HepG2 (cell line): ENCODE measurements at regions of chr6 and their contacts with region 1.

Region 1: DNA sequence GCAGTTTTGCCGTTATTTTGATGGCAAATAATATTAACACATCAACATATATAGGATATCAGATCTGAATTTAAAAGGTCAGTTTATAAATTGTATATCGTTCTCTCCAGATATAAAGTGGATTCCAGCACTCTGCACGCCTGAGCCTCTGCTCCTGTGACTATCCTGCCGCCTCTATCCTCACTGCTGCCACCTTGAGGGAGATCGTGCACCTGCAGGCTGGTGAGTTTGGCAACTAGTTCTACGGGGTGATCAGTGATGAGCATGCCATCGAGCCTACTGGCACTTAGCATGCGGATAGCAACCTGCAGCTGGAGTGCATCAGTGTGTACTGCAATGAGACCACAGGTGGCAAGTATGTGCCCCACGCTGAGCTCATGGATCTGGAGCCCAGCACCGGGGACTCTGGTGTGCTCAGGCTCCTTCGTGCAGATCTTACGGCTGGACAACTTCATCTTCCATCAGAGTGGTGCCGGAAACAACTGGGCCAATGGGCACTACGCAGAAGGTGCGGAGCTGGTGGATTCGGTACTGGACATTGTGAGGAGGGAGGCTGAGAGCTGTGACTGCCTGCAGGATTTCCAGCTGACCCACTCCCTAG is 84.9 kb downstream of the FBXO5 start:
- DNase-seq: peak; percentile 52
- ATAC-seq: peak; percentile 100
- H3K4me3 ChIP-seq: no peak overlapping the region
- H3K27ac ChIP-seq: no peak overlapping the region
- H3K4me1 ChIP-seq: no peaks in the 10 kb centered on the region
- H3K27me3 ChIP-seq: no peaks in the 10 kb centered on the region
- CTCF ChIP-seq: peak; percentile 87
- EP300 ChIP-seq: no peak
- POLR2A ChIP-seq: no peak
- RAD21 ChIP-seq: peak; percentile 43

Region 2: DNA sequence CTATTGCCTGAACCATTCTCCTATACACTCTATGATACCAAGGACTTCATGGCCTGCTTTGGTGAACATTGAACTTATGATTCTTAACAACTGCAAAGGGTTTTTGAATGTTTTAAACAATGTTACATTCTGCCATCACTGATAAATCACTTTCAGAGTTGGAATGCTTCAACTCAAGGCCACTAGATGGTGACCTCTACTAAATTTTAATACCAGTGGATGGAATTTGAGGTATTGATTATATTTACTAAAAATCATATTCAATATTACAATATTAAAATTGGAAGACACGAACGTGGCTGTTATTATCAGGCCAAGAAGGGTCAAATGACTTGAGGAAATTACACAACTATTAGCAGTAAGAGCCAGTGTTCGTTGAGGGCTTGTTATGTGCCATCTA is 181.6 kb before region 1 on chr6:
- CTCF ChIA-PET with region 1: no interaction called
- POLR2A ChIA-PET with region 1: no interaction called
- in situ Hi-C with region 1: no loop called
- intact Hi-C with region 1: loop called (anchors 5 kb)
- DNase-seq: no peak
- ATAC-seq: no peak
- H3K4me3 ChIP-seq: no peak overlapping the region
- H3K27ac ChIP-seq: no peak overlapping the region
- H3K4me1 ChIP-seq: no peaks in the 10 kb centered on the region
- H3K27me3 ChIP-seq: no peaks in the 10 kb centered on the region
- CTCF ChIP-seq: 0 out of 2 replicates have a peak, but pooled peaks have one; percentile 5
- EP300 ChIP-seq: no peak
- POLR2A ChIP-seq: no peak
- RAD21 ChIP-seq: no peak

Region 3: DNA sequence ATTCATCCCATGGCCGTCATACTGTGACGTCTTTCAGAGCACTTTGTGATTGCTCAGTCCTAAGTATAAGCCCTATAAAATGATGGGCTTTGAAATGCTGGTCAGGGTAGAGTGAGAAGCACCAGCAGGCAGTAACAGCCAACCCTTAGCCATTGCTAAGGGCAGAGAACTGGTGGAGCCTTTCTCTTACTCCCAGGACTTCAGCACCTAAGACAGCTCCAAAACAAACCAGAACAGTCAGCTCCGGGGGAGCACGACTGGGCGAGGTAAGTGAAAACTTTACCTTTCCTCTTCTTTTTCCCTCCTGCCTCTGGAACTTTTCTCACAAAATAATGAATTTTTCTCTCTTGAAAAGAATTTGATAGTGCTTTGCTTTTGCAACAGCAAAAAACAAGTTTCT is 147.2 kb before region 1 on chr6 and contains the start of gene VIP:
- CTCF ChIA-PET with region 1: interaction called, 6 read pairs
- POLR2A ChIA-PET with region 1: no interaction called
- in situ Hi-C with region 1: no loop called
- intact Hi-C with region 1: loop called (anchors 10 kb)
- DNase-seq: peak; percentile 35
- ATAC-seq: peak; percentile 89
- H3K4me3 ChIP-seq: no peak within 1 kb of the TSS
- H3K27ac ChIP-seq: no peak within 1 kb of the TSS
- H3K4me1 ChIP-seq: peaks cover 8% of the 10 kb centered on the region; the same call in 1 of the 2 replicates
- H3K27me3 ChIP-seq: no peaks in the 10 kb centered on the region
- CTCF ChIP-seq: no peak
- EP300 ChIP-seq: no peak
- POLR2A ChIP-seq: no peak
- RAD21 ChIP-seq: no peak
- total RNA-seq, gene VIP: not detected in 2 replicates

Region 4: DNA sequence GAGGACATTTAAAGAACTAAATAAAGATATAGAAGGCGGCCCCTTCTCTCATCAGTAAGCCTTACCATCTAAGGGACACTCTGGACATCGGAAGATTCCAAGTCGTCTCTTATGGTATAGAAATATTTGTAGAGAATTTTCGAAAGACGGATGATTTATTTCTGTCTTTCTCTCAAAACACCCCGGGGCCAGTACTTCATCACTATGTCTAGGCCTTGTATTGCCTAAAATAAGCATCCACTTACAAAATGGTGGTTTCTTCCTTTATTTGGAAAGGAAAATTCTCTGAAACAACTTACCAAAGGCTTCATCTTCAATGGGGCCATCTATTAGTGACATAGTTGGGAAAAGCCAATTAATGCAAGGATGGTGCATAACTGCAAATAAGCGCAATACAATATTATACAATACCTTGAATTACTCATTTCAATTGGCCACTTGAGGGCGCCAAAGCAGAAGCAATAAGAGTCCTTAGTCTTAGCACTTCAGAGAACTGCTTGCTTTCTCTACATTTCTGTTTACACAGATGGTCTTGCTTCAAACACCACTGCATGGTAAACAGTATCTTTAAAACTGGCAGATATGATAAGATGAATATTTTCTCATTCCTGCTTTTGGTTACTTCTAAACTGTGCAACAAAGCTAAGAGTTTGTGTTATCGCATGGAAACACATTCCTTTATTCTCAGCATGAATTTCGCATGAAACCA is 34.1 kb before region 1 on chr6:
- CTCF ChIA-PET with region 1: interaction called, 15 read pairs
- POLR2A ChIA-PET with region 1: no interaction called
- in situ Hi-C with region 1: no loop called
- intact Hi-C with region 1: loop called (anchors 1 kb)
- DNase-seq: peak; percentile 74
- ATAC-seq: peak; percentile 98
- H3K4me3 ChIP-seq: no peak overlapping the region
- H3K27ac ChIP-seq: no peak overlapping the region
- H3K4me1 ChIP-seq: no peaks in the 10 kb centered on the region
- H3K27me3 ChIP-seq: no peaks in the 10 kb centered on the region
- CTCF ChIP-seq: peak; percentile 88
- EP300 ChIP-seq: no peak
- POLR2A ChIP-seq: no peak
- RAD21 ChIP-seq: peak; percentile 65